CD8-positive, alpha-beta T cell (primary cell): ENCODE measurements at regions of chr20 and their contacts with region 1.

Region 1: GRCh38 chr20:8315639-8316573 is 183.8 kb downstream of the PLCB1 start:
- DNase-seq: no peak
- ATAC-seq: no peak
- H3K4me3 ChIP-seq: no peak overlapping the region
- H3K4me3 Mint-ChIP-seq: no peak overlapping the region
- H3K27ac ChIP-seq: no peak overlapping the region
- H3K27ac Mint-ChIP-seq: no peak overlapping the region
- H3K4me1 ChIP-seq: no peaks in the 10 kb centered on the region
- H3K4me1 Mint-ChIP-seq: no peaks in the 10 kb centered on the region
- H3K27me3 ChIP-seq: no peaks in the 10 kb centered on the region
- H3K27me3 Mint-ChIP-seq: no peaks in the 10 kb centered on the region
- CTCF ChIP-seq: no peak

Region 2: GRCh38 chr20:7094438-7094997 is 1221.4 kb before region 1 on chr20:
- CTCF ChIA-PET with region 1: no interaction called
- POLR2A ChIA-PET with region 1: no interaction called
- intact Hi-C with region 1: no loop called
- DNase-seq: no peak
- ATAC-seq: no peak
- H3K4me3 ChIP-seq: no peak overlapping the region
- H3K4me3 Mint-ChIP-seq: no peak overlapping the region
- H3K27ac ChIP-seq: no peak overlapping the region
- H3K27ac Mint-ChIP-seq: no peak overlapping the region
- H3K4me1 ChIP-seq: no peaks in the 10 kb centered on the region
- H3K4me1 Mint-ChIP-seq: no peaks in the 10 kb centered on the region
- H3K27me3 ChIP-seq: no peaks in the 10 kb centered on the region
- H3K27me3 Mint-ChIP-seq: no peaks in the 10 kb centered on the region
- CTCF ChIP-seq: no peak

Region 3: GRCh38 chr20:8291873-8292272 is 24.0 kb before region 1 on chr20:
- CTCF ChIA-PET with region 1: no interaction called
- POLR2A ChIA-PET with region 1: no interaction called
- intact Hi-C with region 1: no loop called
- DNase-seq: no peak
- ATAC-seq: no peak
- H3K4me3 ChIP-seq: no peak overlapping the region
- H3K4me3 Mint-ChIP-seq: no peak overlapping the region
- H3K27ac ChIP-seq: no peak overlapping the region
- H3K27ac Mint-ChIP-seq: no peak overlapping the region
- H3K4me1 ChIP-seq: no peaks in the 10 kb centered on the region
- H3K4me1 Mint-ChIP-seq: no peaks in the 10 kb centered on the region
- H3K27me3 ChIP-seq: no peaks in the 10 kb centered on the region
- H3K27me3 Mint-ChIP-seq: no peaks in the 10 kb centered on the region
- CTCF ChIP-seq: no peak

Region 4: GRCh38 chr20:8335495-8336195 is 19.7 kb after region 1 on chr20:
- CTCF ChIA-PET with region 1: no interaction called
- POLR2A ChIA-PET with region 1: no interaction called
- intact Hi-C with region 1: loop called in 1 of 2 experiments (anchors 2 kb)
- DNase-seq: no peak
- ATAC-seq: no peak
- H3K4me3 ChIP-seq: no peak overlapping the region
- H3K4me3 Mint-ChIP-seq: no peak overlapping the region
- H3K27ac ChIP-seq: no peak overlapping the region
- H3K27ac Mint-ChIP-seq: no peak overlapping the region
- H3K4me1 ChIP-seq: no peaks in the 10 kb centered on the region
- H3K4me1 Mint-ChIP-seq: peaks cover under 1% of the 10 kb centered on the region
- H3K27me3 ChIP-seq: no peaks in the 10 kb centered on the region
- H3K27me3 Mint-ChIP-seq: no peaks in the 10 kb centered on the region
- CTCF ChIP-seq: no peak